ENCODE measurements at regions of chr21 and their contacts with region 1.

Region 1: DNA sequence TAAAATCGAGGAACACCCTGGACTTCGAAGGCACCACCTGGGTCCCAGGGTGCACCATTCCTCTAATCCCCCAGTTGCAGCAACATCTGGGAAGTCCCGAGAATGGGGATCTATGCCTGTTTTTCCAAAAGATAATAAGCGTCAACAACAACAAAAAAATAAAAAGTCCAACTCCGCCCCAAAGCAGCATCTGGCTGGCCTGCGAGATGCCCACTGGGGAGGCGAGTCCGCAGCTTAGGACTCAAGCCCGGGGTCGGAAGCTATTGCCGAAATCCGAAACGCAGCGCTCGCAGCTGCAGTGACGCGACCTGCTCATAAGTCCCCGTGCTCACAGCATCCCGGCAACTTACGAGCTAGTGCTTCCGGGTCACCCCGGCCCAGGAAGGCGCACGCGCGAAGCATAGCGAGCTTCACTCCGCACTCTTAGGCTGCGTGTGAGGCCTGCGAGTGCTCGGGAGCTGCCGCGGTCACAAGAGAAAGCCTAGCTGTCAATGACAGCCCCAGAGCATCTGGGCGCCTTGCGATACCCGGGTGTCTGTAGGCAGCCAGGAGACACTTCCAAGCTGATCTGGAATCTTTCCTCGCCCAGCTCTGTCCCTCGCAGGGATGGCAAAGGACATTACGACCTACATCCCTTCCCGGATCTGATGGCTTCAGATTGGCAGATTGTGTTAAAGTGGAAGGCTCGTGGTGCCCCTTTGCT is 9.9 kb upstream of the LTN1 start:
- DNase-seq: peak; percentile 94 to 98 (median 95)
- H3K4me3 ChIP-seq: peak overlapping the region; percentile 74
- H3K27ac ChIP-seq: peak overlapping the region; percentile 61 to 89
- H3K4me1 ChIP-seq: no peaks in the 10 kb centered on the region
- H3K27me3 ChIP-seq: no peaks in the 10 kb centered on the region
- CTCF ChIP-seq: no peak
- EP300 ChIP-seq: no peak
- POLR2A ChIP-seq: peak; percentile 98

Region 2: GRCh38 chr21:29024474-29025327 is 22.1 kb after region 1 on chr21 and contains the start of gene USP16:
- intact Hi-C with region 1: loop called in 1 of 4 experiments (anchors 2 kb)
- DNase-seq: peak; percentile 93 to 96 (median 96)
- H3K4me3 ChIP-seq: peak within 1 kb of the TSS; percentile 61
- H3K27ac ChIP-seq: peak within 1 kb of the TSS; percentile 96 to 98
- H3K4me1 ChIP-seq: peaks cover 6% of the 10 kb centered on the region
- H3K27me3 ChIP-seq: no peaks in the 10 kb centered on the region
- CTCF ChIP-seq: peak in 1 of 3 donors; percentile 30
- EP300 ChIP-seq: peak; percentile 79
- POLR2A ChIP-seq: peak; percentile 55
- total RNA-seq, gene USP16: 25.9 to 46.6 (median 31.9) TPM

Region 3: GRCh38 chr21:29104239-29104708 is 101.7 kb after region 1 on chr21:
- intact Hi-C with region 1: no loop called
- DNase-seq: no peak
- H3K4me3 ChIP-seq: no peak overlapping the region
- H3K27ac ChIP-seq: no peak overlapping the region
- H3K4me1 ChIP-seq: no peaks in the 10 kb centered on the region
- H3K27me3 ChIP-seq: no peaks in the 10 kb centered on the region
- CTCF ChIP-seq: no peak
- EP300 ChIP-seq: no peak
- POLR2A ChIP-seq: no peak

Region 4: DNA sequence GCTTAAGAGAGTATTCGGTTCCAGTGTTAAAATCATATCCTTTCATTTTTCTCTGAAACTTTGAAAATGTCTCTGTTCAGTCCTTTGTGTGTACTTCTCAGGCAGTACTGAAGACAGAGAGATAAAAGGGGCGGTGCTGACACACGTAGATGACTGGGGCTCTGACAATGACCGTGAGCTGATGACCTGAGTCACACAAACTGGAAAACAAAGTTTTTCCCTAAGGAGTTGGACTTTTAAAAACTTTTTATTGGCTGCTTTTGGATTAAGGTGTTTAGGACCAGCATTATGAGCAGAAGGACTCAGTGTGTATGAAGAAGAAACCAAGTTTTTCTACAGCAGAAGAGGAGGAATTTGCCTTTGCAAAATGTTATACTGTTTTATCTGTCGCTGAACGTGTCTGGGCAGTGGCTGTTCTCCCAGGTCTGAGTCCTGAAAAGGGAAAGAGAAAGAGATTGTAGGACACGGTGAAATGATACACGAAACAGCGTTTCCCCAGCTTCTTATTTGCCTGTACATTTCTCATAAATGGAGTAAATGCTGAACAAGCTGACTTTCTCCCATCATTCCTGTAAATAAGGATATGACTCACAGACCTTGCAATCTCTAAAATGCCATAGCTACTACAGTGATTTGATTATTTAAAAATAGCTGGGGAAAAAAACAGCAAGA is 179.3 kb after region 1 on chr21:
- intact Hi-C with region 1: no loop called
- DNase-seq: peak in 1 of 5 donors; percentile 26
- H3K4me3 ChIP-seq: peak overlapping the region; percentile 31
- H3K27ac ChIP-seq: peak overlapping the region in 1 of 2 donors; percentile 66
- H3K4me1 ChIP-seq: peaks cover 6% of the 10 kb centered on the region
- H3K27me3 ChIP-seq: no peaks in the 10 kb centered on the region
- CTCF ChIP-seq: no peak
- EP300 ChIP-seq: peak; percentile 48
- POLR2A ChIP-seq: no peak

Region 5: DNA sequence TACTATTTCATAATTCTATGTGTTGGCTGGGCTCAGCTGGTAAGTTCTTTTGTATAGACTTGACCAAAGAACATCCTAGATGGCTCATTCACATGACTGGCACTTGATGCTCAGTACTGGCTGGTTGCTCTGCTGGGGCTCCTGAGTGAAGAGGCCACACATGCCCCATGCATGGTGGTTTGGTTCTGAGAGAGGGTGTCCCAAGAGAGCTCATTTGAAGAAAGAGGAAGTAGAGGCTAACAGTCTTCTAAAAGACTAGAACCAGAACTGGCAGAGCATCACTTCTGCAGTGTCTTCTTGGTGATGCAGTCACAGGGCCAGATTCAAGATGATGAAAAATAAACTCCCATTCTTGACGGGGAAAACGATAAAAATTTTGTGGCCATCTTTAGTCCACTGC is 290.9 kb after region 1 on chr21:
- intact Hi-C with region 1: no loop called
- DNase-seq: no peak
- H3K4me3 ChIP-seq: no peak overlapping the region
- H3K27ac ChIP-seq: no peak overlapping the region
- H3K4me1 ChIP-seq: peaks cover 2% of the 10 kb centered on the region
- H3K27me3 ChIP-seq: no peaks in the 10 kb centered on the region
- CTCF ChIP-seq: no peak
- EP300 ChIP-seq: no peak
- POLR2A ChIP-seq: no peak

Region 6: GRCh38 chr21:29360799-29361765 is 358.5 kb after region 1 on chr21:
- intact Hi-C with region 1: no loop called
- DNase-seq: no peak
- H3K4me3 ChIP-seq: no peak overlapping the region
- H3K27ac ChIP-seq: no peak overlapping the region
- H3K4me1 ChIP-seq: no peaks in the 10 kb centered on the region
- H3K27me3 ChIP-seq: no peaks in the 10 kb centered on the region
- CTCF ChIP-seq: no peak
- EP300 ChIP-seq: no peak
- POLR2A ChIP-seq: no peak